H1 (cell line): ENCODE measurements at regions of chr3 and their contacts with region 1.

Region 1: GRCh38 chr3:141011232-141011996 is 39.7 kb upstream of the SPSB4 start:
- DNase-seq: peak; percentile 66 to 98
- H3K4me3 ChIP-seq: no peak overlapping the region
- H3K27ac ChIP-seq: no peak overlapping the region
- H3K4me1 ChIP-seq: peaks cover 0 to 11% (median 0%) of the 10 kb centered on the region in 4 experiments; a peak in 2 of 7 replicates
- H3K27me3 ChIP-seq: peaks cover 0 to 2% (median 0%) of the 10 kb centered on the region in 4 experiments; a peak in 1 of 7 replicates
- CTCF ChIP-seq: peak; percentile 91 to 98 (median 96)
- EP300 ChIP-seq: no peak
- POLR2A ChIP-seq: no peak
- RAD21 ChIP-seq: peak; percentile 91 to 94

Region 2: DNA sequence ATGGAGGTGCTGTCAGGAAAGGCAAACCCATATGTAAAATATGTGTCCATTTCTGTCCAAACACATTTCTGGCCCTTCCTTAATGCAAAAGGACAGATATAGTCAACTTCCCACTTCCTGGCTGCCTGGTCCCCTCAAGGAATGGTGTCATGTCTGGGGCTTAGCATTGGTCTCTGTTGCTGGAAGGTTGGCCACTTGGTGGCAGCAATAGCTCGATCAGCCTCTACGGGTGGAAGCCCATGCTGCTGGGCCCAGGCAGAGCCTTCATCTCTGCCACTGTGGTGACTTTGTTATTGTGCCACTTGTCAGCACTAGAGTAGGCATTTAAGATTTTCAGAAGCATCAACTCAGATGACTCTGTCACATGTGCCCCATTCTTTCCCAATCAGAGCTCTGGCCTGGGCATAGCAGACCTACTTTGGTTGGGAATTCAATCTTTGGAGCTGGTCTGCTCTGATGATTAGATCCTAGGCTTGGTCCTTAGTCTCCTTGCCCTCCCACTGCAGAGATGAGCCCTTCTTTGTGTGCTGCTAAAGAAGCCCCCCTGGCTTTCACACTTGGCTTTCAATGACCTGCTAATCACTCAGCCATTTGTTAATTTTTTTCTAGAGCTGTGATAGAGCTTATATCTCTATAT is 11.3 kb before region 1 on chr3:
- CTCF ChIA-PET with region 1: interaction called, 26 read pairs
- POLR2A ChIA-PET with region 1: no interaction called
- DNase-seq: peak; percentile 34 to 76
- H3K4me3 ChIP-seq: no peak overlapping the region
- H3K27ac ChIP-seq: no peak overlapping the region
- H3K4me1 ChIP-seq: no peaks in the 10 kb centered on the region
- H3K27me3 ChIP-seq: no peaks in the 10 kb centered on the region
- CTCF ChIP-seq: peak; percentile 87 to 97 (median 95)
- EP300 ChIP-seq: no peak
- POLR2A ChIP-seq: no peak
- RAD21 ChIP-seq: peak; percentile 99

Region 3: DNA sequence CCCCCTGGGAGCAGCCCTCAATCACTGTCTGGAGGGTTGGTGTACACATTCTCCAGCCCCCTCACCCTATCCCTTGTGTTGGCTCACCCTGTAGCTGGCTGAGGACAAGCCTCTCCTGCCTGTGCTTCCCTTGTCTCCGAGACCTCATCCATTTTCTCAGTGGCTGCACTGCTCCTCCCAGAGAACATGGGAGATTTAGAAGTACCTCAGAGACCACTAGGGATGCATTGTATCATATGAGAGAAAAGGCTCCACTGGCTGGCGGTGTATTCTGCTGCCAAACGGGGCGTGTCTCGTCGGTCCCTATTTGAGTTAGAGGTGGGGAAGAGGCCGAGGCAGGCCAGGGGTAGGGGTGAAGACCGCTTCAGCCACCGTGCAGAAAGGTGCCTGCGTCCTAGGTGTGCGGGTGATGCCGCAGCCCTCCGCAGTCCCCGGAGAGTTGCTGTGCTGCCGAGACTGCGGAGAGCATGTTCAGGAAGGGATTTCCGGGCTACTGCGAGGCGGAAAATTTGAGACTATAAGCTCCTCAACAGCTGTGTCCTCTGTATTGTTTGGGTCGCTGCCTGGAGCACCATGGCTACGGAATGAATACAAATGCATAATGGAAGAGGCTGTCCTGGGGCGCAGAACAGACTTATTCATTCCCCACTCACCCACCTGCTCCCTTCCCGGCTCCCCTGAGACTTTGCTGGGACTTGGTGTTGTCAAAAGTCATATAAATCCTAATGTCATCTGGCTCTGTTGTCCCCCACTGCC is 83.6 kb after region 1 on chr3:
- CTCF ChIA-PET with region 1: interaction called, 107 read pairs
- POLR2A ChIA-PET with region 1: interaction called, 4 read pairs
- DNase-seq: no peak
- H3K4me3 ChIP-seq: no peak overlapping the region
- H3K27ac ChIP-seq: no peak overlapping the region
- H3K4me1 ChIP-seq: peaks cover 4 to 22% (median 9%) of the 10 kb centered on the region in 4 experiments
- H3K27me3 ChIP-seq: no peaks in the 10 kb centered on the region
- CTCF ChIP-seq: no peak
- EP300 ChIP-seq: no peak
- POLR2A ChIP-seq: no peak
- RAD21 ChIP-seq: no peak

Region 4: DNA sequence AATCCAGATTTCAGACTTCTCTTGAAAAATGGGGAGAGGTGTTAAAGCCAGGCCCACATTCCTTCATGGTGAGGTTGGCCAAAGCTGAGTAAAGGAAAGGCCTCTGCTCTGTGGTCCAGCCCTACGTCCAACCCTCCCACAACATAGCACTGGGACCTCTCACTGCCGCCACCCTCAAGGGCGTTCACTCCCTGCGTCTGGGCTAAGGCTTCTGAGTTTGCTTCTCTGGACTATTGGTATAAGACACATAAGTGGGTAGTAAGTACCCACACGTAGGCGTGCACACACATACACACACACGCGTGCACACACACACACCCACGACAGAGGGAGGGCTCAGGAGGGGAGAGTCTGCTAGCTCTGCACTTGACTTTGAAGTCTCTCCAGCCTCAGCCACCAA is 140.0 kb after region 1 on chr3:
- CTCF ChIA-PET with region 1: interaction called, 10 read pairs
- POLR2A ChIA-PET with region 1: no interaction called
- DNase-seq: no peak
- H3K4me3 ChIP-seq: no peak overlapping the region
- H3K27ac ChIP-seq: no peak overlapping the region
- H3K4me1 ChIP-seq: peaks cover 2 to 5% (median 3%) of the 10 kb centered on the region in 4 experiments; a peak in 6 of 7 replicates
- H3K27me3 ChIP-seq: no peaks in the 10 kb centered on the region
- CTCF ChIP-seq: no peak
- EP300 ChIP-seq: no peak
- POLR2A ChIP-seq: no peak
- RAD21 ChIP-seq: no peak

Region 5: DNA sequence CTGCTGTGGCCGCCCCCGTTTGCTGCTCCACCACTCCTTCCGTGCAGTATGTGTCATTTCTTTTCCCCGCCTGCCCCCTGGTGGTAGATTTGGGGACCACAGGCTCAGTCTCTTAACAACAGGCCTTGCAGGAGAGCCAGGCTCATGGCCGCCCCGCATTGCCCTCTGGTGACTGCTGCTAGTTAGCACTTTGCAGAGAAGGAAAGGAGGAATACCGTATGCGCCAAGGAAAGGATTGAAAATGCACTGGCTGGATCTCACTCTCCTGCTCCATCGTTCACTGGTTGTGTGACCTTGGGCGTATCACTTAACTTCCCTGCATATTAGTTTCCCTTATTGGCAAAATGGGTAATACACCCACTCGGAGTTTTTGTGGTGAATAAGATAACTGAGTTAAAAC is 180.9 kb after region 1 on chr3:
- CTCF ChIA-PET with region 1: interaction called, 94 read pairs
- POLR2A ChIA-PET with region 1: no interaction called
- DNase-seq: peak; percentile 88 to 100
- H3K4me3 ChIP-seq: no peak overlapping the region
- H3K27ac ChIP-seq: no peak overlapping the region
- H3K4me1 ChIP-seq: no peaks in the 10 kb centered on the region
- H3K27me3 ChIP-seq: no peaks in the 10 kb centered on the region
- CTCF ChIP-seq: peak; percentile 89 to 99 (median 99)
- EP300 ChIP-seq: no peak
- POLR2A ChIP-seq: no peak
- RAD21 ChIP-seq: peak; percentile 100

Region 6: DNA sequence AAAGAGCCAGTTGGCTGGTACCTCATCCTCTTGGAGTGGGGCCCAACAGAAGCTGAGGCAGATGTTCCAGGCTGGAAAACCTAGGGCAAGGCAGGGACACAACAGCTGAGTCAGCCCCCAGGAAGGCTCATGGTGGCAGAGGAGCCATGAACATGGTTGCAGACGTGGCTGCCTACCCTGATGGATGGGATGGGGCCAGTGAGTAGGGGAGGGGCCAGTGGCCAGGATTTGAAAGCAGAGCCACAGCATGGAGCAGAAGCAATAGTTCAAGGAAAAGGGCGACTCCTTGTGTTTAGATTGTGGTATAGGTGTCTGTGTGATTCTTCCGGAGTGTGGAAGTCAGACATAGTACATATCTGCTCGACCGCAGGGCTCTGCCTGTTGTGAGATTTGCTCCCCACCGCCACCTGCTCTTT is 244.4 kb after region 1 on chr3:
- CTCF ChIA-PET with region 1: interaction called, 12 read pairs
- POLR2A ChIA-PET with region 1: no interaction called
- DNase-seq: peak in 1 of 2 experiments; percentile 54
- H3K4me3 ChIP-seq: no peak overlapping the region
- H3K27ac ChIP-seq: no peak overlapping the region
- H3K4me1 ChIP-seq: peaks cover 0 to 5% (median 0%) of the 10 kb centered on the region in 4 experiments; a peak in 3 of 7 replicates
- H3K27me3 ChIP-seq: no peaks in the 10 kb centered on the region
- CTCF ChIP-seq: peak in 2 of 3 experiments; percentile 47 to 78; a peak in 3 of 4 replicates
- EP300 ChIP-seq: no peak
- POLR2A ChIP-seq: no peak
- RAD21 ChIP-seq: peak; percentile 65 to 73

Region 7: GRCh38 chr3:141336672-141337522 is 325.5 kb after region 1 on chr3:
- CTCF ChIA-PET with region 1: no interaction called
- POLR2A ChIA-PET with region 1: no interaction called
- DNase-seq: no peak
- H3K4me3 ChIP-seq: no peak overlapping the region
- H3K27ac ChIP-seq: no peak overlapping the region
- H3K4me1 ChIP-seq: peaks cover 0 to 5% (median 3%) of the 10 kb centered on the region in 4 experiments; a peak in 3 of 7 replicates
- H3K27me3 ChIP-seq: no peaks in the 10 kb centered on the region
- CTCF ChIP-seq: no peak
- EP300 ChIP-seq: no peak
- POLR2A ChIP-seq: no peak
- RAD21 ChIP-seq: no peak